Endothelial cell of umbilical vein (primary cell): ENCODE measurements at regions of chr19 and their contacts with region 1.

Region 1: DNA sequence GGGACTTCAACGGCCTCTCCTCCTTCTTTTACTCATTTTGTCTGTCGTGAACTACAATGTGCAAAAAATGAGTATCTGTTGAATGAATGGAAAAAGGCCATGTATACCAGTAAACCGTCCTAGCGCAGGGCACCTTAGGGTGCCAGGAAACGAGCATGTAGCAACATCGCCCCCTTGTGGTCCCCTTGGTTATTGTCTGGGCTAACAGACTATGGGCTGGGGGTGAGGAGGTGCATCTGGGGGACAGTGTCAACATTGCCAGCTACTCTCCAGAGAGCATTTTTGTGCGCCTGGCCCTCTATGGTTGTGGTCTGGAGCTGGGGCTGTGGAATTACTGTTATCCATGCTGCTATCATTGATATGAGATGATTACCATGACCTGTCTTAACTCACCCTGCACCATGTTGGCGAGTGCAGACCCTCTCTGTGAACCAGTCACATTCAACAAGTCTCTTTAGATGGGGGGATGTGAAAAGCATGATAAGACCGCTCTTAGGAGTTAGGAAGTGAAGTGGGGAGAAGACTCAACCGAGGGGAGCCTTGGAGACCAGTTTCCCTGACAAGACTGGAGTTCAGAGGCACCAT is 22.8 kb upstream of the SIGLEC11 start:
- DNase-seq: peak; percentile 38
- H3K4me3 ChIP-seq: no peak overlapping the region
- H3K27ac ChIP-seq: no peak overlapping the region
- H3K4me1 ChIP-seq: no peaks in the 10 kb centered on the region
- H3K27me3 ChIP-seq: no peaks in the 10 kb centered on the region
- CTCF ChIP-seq: peak; percentile 82 to 84
- POLR2A ChIP-seq: no peak

Region 2: DNA sequence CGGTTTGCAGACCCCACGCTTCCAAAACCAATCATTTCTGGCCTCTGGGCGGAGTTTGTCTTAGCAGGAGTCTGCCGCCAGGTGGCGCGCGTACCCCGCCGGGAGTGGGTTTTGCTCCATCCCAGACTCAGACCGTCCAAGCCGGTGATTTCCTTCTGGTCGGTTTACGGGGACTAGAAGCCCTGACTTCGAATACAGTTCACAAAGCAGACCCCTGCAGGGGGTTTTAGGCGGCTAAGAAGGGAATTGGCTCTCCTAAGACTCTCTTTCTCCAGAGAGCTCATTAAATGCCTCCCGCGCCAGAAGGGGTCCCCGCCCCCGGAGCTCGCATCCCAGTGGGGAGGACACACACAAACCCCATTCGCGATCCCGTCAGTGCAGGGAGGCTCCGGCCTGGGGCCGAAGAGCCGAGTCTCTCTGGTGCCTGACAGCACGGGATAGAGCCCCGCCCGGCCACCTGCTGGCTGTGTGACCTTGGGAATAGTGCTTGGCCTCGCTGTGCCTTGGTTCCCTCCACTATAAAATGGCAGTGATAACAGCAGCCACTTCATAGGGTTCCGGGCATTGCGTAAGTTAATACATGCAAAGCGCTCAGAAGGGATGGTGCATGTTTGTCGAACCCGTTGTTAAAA is 45.9 kb before region 1 on chr19:
- CTCF ChIA-PET with region 1: interaction called, 8 read pairs
- POLR2A ChIA-PET with region 1: no interaction called
- dilution Hi-C with region 1: no loop called
- intact Hi-C with region 1: loop called (anchors 1 kb)
- DNase-seq: peak; percentile 67
- H3K4me3 ChIP-seq: peak overlapping the region in 1 of 3 experiments; percentile 19
- H3K27ac ChIP-seq: no peak overlapping the region
- H3K4me1 ChIP-seq: peaks cover 3% of the 10 kb centered on the region
- H3K27me3 ChIP-seq: no peaks in the 10 kb centered on the region
- CTCF ChIP-seq: peak; percentile 83 to 97
- POLR2A ChIP-seq: no peak

Region 3: DNA sequence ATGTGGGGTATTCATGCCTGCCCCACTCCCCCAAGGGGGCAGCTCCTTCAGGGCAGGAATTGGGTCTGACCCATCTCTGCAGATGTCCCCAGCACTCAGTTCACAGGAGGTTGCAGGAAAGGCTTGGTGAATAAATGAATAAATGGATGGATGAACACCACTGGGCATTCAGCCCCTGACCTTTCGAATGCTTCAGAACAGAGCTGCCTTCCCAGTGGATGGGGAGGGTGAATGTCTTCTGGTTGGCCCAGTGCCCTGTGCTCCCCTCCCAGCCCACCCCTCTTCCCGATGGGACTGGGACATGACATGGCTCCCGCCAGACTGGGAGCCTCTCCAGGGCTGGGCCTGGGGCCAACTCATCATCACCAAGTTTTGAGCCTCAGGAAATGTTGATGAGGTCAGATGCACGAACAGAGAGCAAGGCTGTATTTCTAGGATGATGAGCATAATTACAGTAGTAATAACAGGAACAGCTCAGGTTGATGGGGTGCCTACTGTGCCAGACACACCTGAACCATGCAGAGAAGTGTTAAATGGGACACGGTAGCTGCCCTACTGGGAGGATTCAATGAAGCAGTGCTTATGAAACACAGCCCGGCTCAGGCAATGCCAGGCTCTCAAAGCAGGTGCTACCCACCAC is 15.8 kb after region 1 on chr19:
- CTCF ChIA-PET with region 1: interaction called, 3 read pairs
- POLR2A ChIA-PET with region 1: interaction called, 13 read pairs
- dilution Hi-C with region 1: no loop called
- intact Hi-C with region 1: no loop called
- DNase-seq: no peak
- H3K4me3 ChIP-seq: no peak overlapping the region
- H3K27ac ChIP-seq: no peak overlapping the region
- H3K4me1 ChIP-seq: peaks cover 5% of the 10 kb centered on the region
- H3K27me3 ChIP-seq: no peaks in the 10 kb centered on the region
- CTCF ChIP-seq: no peak
- POLR2A ChIP-seq: no peak

Region 4: DNA sequence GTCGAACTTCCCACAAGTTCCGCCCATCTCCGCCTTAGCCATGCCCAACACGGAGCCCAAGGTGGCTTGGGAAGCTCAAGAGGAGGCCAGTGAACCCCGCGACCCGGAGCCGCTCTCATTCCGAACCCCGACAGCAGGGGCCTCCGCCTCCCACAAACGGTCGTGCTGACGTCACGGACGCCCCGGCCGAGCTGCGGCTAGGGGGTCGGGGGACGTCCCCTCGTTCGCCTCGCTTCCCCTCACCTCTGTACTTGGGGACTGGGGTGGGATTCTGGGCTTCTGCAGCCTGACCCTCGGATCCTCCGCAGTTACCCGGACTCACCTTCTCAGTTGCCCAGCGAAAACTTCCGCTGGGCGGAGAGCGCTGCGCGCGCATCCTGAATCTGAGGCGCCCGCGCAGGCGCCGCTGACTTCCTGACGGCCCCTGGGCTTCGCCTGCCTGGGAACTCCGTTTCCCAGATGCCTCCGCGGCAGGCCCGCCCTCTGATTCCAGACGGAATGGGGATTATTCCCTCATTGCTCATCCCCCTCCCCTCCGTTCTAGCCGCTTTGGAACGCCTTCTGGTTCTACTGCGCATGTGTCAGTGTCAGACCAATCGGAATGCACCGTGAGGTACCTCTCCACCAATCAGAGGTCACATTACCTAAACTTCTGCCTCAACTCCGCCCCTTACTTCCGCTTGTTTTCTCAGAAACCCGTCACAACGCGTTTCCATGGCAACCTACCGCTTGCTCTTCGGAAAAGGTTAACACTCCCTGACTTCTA is 41.5 kb after region 1 on chr19 and contains the start of gene VRK3:
- CTCF ChIA-PET with region 1: no interaction called
- POLR2A ChIA-PET with region 1: no interaction called
- dilution Hi-C with region 1: no loop called
- intact Hi-C with region 1: loop called (anchors 1 kb)
- DNase-seq: peak; percentile 100
- H3K4me3 ChIP-seq: peak within 1 kb of the TSS; percentile 60 to 82 (median 82)
- H3K27ac ChIP-seq: peak within 1 kb of the TSS; percentile 92
- H3K4me1 ChIP-seq: peaks cover 7% of the 10 kb centered on the region
- H3K27me3 ChIP-seq: no peaks in the 10 kb centered on the region
- CTCF ChIP-seq: peak in 1 of 2 donors; percentile 9
- POLR2A ChIP-seq: peak; percentile 88
- total RNA-seq, gene VRK3: 36.0 and 37.4 TPM in 2 replicates